Naive thymus-derived CD4-positive, alpha-beta T cell (primary cell): ENCODE measurements at regions of chr15 and their contacts with region 1.

Region 1: DNA sequence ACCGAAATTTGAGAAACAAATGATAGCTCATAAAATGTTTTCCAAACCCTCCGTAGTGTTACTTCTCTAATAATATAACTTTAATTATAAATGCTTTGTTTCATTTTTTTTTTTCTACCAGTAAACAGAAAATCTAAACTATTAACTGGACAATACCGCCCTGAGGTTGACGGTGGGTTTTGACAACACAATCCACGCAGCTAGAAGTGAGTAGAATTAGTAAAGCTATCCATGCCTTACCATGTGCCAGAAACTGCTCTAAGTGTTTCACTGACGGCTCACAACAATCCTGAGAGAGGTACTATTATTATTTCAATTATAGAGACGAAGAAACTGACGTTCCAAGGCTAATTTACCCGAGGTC is 410 bp downstream of the NDUFAF1 start:
- DNase-seq: no peak
- ATAC-seq: no peak
- H3K4me3 ChIP-seq: peak overlapping the region; percentile 92
- H3K4me3 Mint-ChIP-seq: peak overlapping the region; percentile 87 to 97 (median 96)
- H3K27ac ChIP-seq: peak overlapping the region; percentile 81
- H3K27ac Mint-ChIP-seq: peak overlapping the region; percentile 89 to 96 (median 94)
- H3K4me1 ChIP-seq: peaks cover 0 to 14% of the 10 kb centered on the region in 2 donors
- H3K4me1 Mint-ChIP-seq: peaks cover 0 to 32% (median 24%) of the 10 kb centered on the region in 7 donors
- H3K27me3 ChIP-seq: no peaks in the 10 kb centered on the region
- H3K27me3 Mint-ChIP-seq: no peaks in the 10 kb centered on the region

Region 2: DNA sequence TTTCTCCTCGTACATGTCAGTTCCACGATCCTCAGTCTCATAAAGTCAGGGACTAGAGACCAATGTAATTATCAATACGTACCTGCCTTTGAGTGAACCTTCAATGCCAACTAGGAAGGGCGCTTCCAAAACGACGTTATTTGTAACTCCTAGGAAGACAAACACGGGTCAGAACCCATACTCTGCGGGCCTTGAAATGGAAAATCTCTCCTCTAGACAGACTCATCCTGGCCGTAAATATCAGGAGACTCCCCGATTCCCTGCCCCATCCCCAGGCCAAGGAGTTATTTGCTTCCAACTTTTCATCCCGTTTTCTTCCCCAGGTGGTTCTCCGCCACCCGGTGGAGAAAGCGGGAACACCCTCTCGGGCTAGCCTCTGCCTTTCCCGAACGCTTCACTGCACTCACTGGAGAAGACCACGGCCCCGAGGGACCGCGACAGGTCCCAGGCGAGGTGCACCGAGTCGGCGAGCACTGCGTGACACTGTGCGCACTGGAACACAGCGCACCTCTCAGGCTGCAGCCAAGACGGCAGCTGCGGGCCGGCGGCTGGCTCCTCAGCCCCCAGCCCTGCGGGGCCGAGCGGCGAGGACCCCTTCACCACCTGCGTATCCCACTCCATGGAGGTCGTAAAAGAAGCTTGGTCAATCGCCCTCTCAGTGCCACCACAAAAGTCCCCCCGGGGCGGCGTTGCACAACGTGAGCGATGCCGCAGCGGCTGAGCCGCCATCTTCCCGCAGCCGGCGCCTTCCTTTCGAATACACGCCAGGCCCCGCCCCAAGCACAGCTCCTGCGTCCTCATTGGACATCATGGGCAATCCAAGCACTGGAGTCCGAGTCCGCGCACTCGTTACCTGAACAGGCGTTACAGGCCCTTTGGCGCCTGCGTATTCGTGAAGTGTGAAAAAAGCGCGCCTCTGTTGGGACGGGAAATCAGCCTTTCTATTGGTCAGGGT is 69.8 kb before region 1 on chr15 and contains the start of gene OIP5:
- CTCF ChIA-PET with region 1: no interaction called
- POLR2A ChIA-PET with region 1: no interaction called
- intact Hi-C with region 1: loop called (anchors 1 kb)
- DNase-seq: peak; percentile 83 to 99 (median 97)
- ATAC-seq: peak; percentile 98
- H3K4me3 ChIP-seq: peak within 1 kb of the TSS; percentile 95
- H3K4me3 Mint-ChIP-seq: peak within 1 kb of the TSS; percentile 87 to 100 (median 97)
- H3K27ac ChIP-seq: peak within 1 kb of the TSS; percentile 52
- H3K27ac Mint-ChIP-seq: peak within 1 kb of the TSS; percentile 77 to 97 (median 91)
- H3K4me1 ChIP-seq: peaks cover 9 to 13% of the 10 kb centered on the region in 2 donors
- H3K4me1 Mint-ChIP-seq: peaks cover 12 to 32% (median 29%) of the 10 kb centered on the region in 7 donors
- H3K27me3 ChIP-seq: no peaks in the 10 kb centered on the region
- H3K27me3 Mint-ChIP-seq: no peaks in the 10 kb centered on the region
- total RNA-seq, gene OIP5: 0.32 to 15.2 (median 0.54) TPM in 4 of 5 experiments, not detected in the other

Region 3: GRCh38 chr15:41416742-41417406 is 15.0 kb after region 1 on chr15 and contains the start of gene RTF1:
- CTCF ChIA-PET with region 1: no interaction called
- POLR2A ChIA-PET with region 1: interaction called, 8 read pairs
- intact Hi-C with region 1: loop called (anchors 1 kb)
- DNase-seq: peak; percentile 92 to 100 (median 96)
- ATAC-seq: peak; percentile 99
- H3K4me3 ChIP-seq: peak within 1 kb of the TSS; percentile 98
- H3K4me3 Mint-ChIP-seq: peak within 1 kb of the TSS; percentile 86 to 96 (median 95)
- H3K27ac ChIP-seq: peak within 1 kb of the TSS; percentile 81
- H3K27ac Mint-ChIP-seq: peak within 1 kb of the TSS; percentile 74 to 98 (median 93)
- H3K4me1 ChIP-seq: peaks cover 6 to 16% of the 10 kb centered on the region in 2 donors
- H3K4me1 Mint-ChIP-seq: peaks cover 34 to 53% (median 43%) of the 10 kb centered on the region in 7 donors
- H3K27me3 ChIP-seq: no peaks in the 10 kb centered on the region
- H3K27me3 Mint-ChIP-seq: no peaks in the 10 kb centered on the region
- total RNA-seq, gene RTF1: 34.0 to 41.3 (median 37.2) TPM

Region 4: DNA sequence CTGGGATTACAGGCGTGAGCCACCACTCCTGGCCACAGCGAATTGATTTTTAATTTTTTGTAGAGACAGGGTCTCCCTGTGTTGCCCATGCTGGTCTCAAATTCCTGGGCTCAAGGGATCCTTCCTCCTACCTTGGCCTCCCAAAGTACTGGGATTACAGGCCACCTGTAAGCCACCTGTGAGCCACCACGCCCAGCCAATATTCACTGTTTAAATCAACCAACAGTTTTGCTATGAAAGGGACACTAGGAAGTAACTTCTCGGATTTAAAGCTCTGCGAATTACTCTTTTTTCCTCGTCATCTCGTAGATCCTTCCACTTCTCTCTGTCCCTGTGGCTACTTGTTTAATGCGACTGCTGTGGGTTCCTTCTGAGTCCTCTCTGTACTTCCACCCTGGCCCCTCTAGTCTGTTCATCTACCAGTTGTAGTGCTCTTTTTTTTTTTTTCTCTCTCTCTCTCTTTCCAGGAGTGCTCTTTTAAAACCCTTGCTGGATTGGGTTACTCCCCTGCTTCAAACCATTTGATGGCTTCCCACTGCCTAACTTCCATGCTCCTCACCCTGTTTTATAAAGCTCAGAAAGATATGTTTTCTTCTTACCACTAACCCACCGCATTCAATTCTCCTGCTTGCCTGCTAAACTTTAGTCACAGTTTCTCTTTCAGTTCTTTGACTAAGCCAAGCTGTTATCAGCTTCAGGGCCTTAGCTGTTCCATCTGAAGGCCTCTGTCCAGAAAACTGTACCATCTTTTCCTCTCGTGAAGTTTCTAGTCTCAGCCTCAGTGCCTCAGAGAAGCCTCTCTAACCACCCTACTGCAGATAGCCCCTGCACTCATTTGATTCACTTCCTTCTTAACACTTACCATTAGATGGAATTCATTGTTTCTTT is 27.4 kb after region 1 on chr15:
- CTCF ChIA-PET with region 1: no interaction called
- POLR2A ChIA-PET with region 1: no interaction called
- intact Hi-C with region 1: loop called in 1 of 2 experiments (anchors 1 kb)
- DNase-seq: no peak
- ATAC-seq: no peak
- H3K4me3 ChIP-seq: no peak overlapping the region
- H3K4me3 Mint-ChIP-seq: peak overlapping the region in 4 of 10 donors; percentile 4 to 79 (median 13)
- H3K27ac ChIP-seq: no peak overlapping the region
- H3K27ac Mint-ChIP-seq: peak overlapping the region in 5 of 9 donors; percentile 2 to 91 (median 18)
- H3K4me1 ChIP-seq: peaks cover 0 to 2% of the 10 kb centered on the region in 2 donors
- H3K4me1 Mint-ChIP-seq: peaks cover 19 to 31% (median 22%) of the 10 kb centered on the region in 7 donors
- H3K27me3 ChIP-seq: no peaks in the 10 kb centered on the region
- H3K27me3 Mint-ChIP-seq: no peaks in the 10 kb centered on the region

Region 5: GRCh38 chr15:41544650-41545015 is 142.7 kb after region 1 on chr15:
- CTCF ChIA-PET with region 1: no interaction called
- POLR2A ChIA-PET with region 1: no interaction called
- intact Hi-C with region 1: loop called in 1 of 2 experiments (anchors 1 kb)
- DNase-seq: peak in 1 of 9 donors; percentile 1
- ATAC-seq: no peak
- H3K4me3 ChIP-seq: peak overlapping the region; percentile 96
- H3K4me3 Mint-ChIP-seq: peak overlapping the region; percentile 92 to 96 (median 94)
- H3K27ac ChIP-seq: peak overlapping the region; percentile 94
- H3K27ac Mint-ChIP-seq: peak overlapping the region in 8 of 9 donors; percentile 62 to 95 (median 92)
- H3K4me1 ChIP-seq: peaks cover 0 to 6% of the 10 kb centered on the region in 2 donors
- H3K4me1 Mint-ChIP-seq: peaks cover 0 to 31% (median 19%) of the 10 kb centered on the region in 7 donors
- H3K27me3 ChIP-seq: no peaks in the 10 kb centered on the region
- H3K27me3 Mint-ChIP-seq: peaks cover 0 to 4% (median 0%) of the 10 kb centered on the region in 5 donors

Region 6: GRCh38 chr15:41621200-41622193 is 219.6 kb after region 1 on chr15:
- CTCF ChIA-PET with region 1: no interaction called
- POLR2A ChIA-PET with region 1: no interaction called
- intact Hi-C with region 1: loop called in 1 of 2 experiments (anchors 5 kb)
- DNase-seq: peak; percentile 56 to 81 (median 78)
- ATAC-seq: peak; percentile 87
- H3K4me3 ChIP-seq: peak overlapping the region; percentile 67
- H3K4me3 Mint-ChIP-seq: peak overlapping the region; percentile 55 to 87 (median 78)
- H3K27ac ChIP-seq: peak overlapping the region; percentile 41
- H3K27ac Mint-ChIP-seq: peak overlapping the region; percentile 68 to 87 (median 77)
- H3K4me1 ChIP-seq: peaks cover 5 to 8% of the 10 kb centered on the region in 2 donors
- H3K4me1 Mint-ChIP-seq: peaks cover 5 to 29% (median 18%) of the 10 kb centered on the region in 7 donors
- H3K27me3 ChIP-seq: no peaks in the 10 kb centered on the region
- H3K27me3 Mint-ChIP-seq: peaks cover 0 to 29% (median 0%) of the 10 kb centered on the region in 5 donors